ENCODE measurements at regions of chr3 and their contacts with region 1.

Region 1: GRCh38 chr3:131033480-131034080 is 6.9 kb downstream of the NEK11 start:
- DNase-seq: peak; percentile 41
- ATAC-seq: peak; percentile 65
- H3K4me3 ChIP-seq: no peak overlapping the region
- H3K27ac ChIP-seq: no peak overlapping the region
- H3K4me1 ChIP-seq: no peaks in the 10 kb centered on the region
- H3K27me3 ChIP-seq: no peaks in the 10 kb centered on the region
- CTCF ChIP-seq: peak; percentile 37 to 76 (median 55); a peak in 5 of 6 replicates
- POLR2A ChIP-seq: no peak
- RAD21 ChIP-seq: peak; percentile 72

Region 2: DNA sequence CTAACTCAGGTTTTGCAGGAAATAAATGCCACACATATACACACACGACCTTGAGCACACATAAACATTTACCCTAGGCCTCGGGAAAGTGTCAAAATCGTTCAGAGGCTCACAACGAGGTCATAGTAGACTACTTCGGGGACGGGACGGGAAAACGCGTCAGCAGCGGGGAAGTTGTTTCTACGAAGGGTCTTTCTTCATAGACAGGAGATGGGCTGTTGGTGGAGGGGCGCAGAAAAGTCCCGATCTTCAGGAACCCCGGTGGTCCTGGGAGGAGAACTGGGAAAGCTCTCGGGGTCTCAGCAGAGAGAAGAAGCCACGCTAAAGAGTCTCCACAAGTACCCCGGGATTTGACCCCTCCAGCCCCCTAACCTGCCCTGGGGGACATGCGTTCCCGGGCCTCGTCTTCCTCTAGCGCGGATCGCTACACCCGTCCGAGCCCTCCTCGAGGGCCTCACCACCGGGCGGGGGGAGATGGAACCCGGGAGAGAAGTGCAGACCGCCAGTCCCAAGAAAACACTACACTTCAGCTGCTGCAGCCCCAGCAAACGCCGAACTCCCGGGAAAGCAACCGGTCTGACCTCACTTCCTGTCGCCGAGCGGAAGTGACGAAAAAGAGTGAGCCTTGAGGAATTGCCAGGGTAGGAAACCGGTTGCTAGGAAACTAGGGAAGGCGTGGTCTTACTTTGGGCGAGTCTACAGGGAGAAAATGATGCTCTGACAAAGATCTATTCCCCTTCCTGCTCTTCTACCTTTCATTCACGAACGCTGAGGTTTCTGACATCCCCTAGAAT is 287.1 kb before region 1 on chr3 and contains the start of gene PIK3R4:
- CTCF ChIA-PET with region 1: no interaction called
- POLR2A ChIA-PET with region 1: no interaction called
- RAD21 ChIA-PET with region 1: no interaction called
- intact Hi-C with region 1: loop called (anchors 5 kb)
- DNase-seq: peak; percentile 98
- ATAC-seq: peak; percentile 79
- H3K4me3 ChIP-seq: peak within 1 kb of the TSS; percentile 84 to 88
- H3K27ac ChIP-seq: peak within 1 kb of the TSS; percentile 58
- H3K4me1 ChIP-seq: peaks cover 2 to 14% of the 10 kb centered on the region in 2 experiments; a peak in 2 of 4 replicates
- H3K27me3 ChIP-seq: no peaks in the 10 kb centered on the region
- CTCF ChIP-seq: no peak
- POLR2A ChIP-seq: no peak
- RAD21 ChIP-seq: no peak
- total RNA-seq, gene PIK3R4: 23.5 TPM

Region 3: GRCh38 chr3:131658108-131658507 is 624.5 kb after region 1 on chr3:
- CTCF ChIA-PET with region 1: no interaction called
- POLR2A ChIA-PET with region 1: no interaction called
- RAD21 ChIA-PET with region 1: no interaction called
- intact Hi-C with region 1: loop called (anchors 10 kb)
- DNase-seq: no peak
- ATAC-seq: no peak; the same call in 1 of the 2 replicates
- H3K4me3 ChIP-seq: no peak overlapping the region
- H3K27ac ChIP-seq: no peak overlapping the region
- H3K4me1 ChIP-seq: no peaks in the 10 kb centered on the region
- H3K27me3 ChIP-seq: peaks cover 13% of the 10 kb centered on the region; the same call in 1 of the 2 replicates
- CTCF ChIP-seq: no peak; a peak in 1 of 6 replicates
- POLR2A ChIP-seq: no peak
- RAD21 ChIP-seq: 0 out of 2 replicates have a peak, but pooled peaks have one; percentile 13

Region 4: DNA sequence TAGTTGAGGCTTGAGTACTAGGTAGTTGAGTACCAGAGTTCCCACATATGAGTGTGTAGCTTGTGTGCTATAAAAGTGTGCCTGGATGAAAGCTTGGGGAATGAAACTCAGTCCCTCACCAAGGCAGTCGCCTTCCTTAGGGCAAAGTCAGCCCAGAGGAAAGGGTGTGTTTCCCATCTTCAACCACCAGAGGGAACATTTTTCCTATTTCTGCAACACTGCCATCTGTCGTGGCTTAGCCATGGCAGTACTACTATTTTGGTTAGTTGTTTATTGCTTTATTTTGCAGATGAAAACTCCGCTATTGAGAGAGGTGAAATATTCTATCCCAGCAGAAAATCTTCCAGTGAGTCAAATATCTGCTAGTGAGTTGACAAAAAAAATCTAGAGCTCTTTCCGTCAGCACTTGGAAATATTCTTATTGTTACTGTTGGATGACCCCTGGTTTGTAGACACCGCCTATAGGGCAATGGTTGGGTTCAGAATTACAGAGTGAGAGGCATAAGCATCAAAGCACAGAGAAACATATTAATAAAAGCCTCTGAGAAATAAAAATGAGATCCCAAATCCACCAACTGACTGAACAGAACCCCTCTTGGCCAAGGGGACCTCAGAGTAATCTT is 761.3 kb after region 1 on chr3:
- CTCF ChIA-PET with region 1: no interaction called
- POLR2A ChIA-PET with region 1: no interaction called
- RAD21 ChIA-PET with region 1: no interaction called
- intact Hi-C with region 1: loop called (anchors 10 kb)
- DNase-seq: peak; percentile 39
- ATAC-seq: peak; percentile 93
- H3K4me3 ChIP-seq: no peak overlapping the region
- H3K27ac ChIP-seq: no peak overlapping the region
- H3K4me1 ChIP-seq: no peaks in the 10 kb centered on the region
- H3K27me3 ChIP-seq: peaks cover 12% of the 10 kb centered on the region; the same call in 1 of the 2 replicates
- CTCF ChIP-seq: peak; percentile 78 to 97 (median 83)
- POLR2A ChIP-seq: no peak
- RAD21 ChIP-seq: peak; percentile 69

Region 5: GRCh38 chr3:132180337-132180791 is 1146.8 kb after region 1 on chr3:
- CTCF ChIA-PET with region 1: no interaction called
- POLR2A ChIA-PET with region 1: no interaction called
- RAD21 ChIA-PET with region 1: no interaction called
- intact Hi-C with region 1: loop called (anchors 10 kb)
- DNase-seq: peak; percentile 34
- ATAC-seq: peak; percentile 90
- H3K4me3 ChIP-seq: no peak overlapping the region
- H3K27ac ChIP-seq: no peak overlapping the region
- H3K4me1 ChIP-seq: no peaks in the 10 kb centered on the region
- H3K27me3 ChIP-seq: peaks cover 49% of the 10 kb centered on the region
- CTCF ChIP-seq: peak; percentile 49 to 66 (median 54)
- POLR2A ChIP-seq: no peak
- RAD21 ChIP-seq: peak; percentile 64